Activated T-helper 2 cell treated with anti-CD3 and anti-CD28 coated beads, Interferon-gamma antibody, Interleukin-2, Interleukin-4, amounts not matched to agents 10 μg/mL and 5 μg/mL and 100 μg/mL, durations not matched to agents 14 hours and 24 hours and 36 hours (primary cell): ENCODE measurements at regions of chr12 and their contacts with region 1.

Region 1: DNA sequence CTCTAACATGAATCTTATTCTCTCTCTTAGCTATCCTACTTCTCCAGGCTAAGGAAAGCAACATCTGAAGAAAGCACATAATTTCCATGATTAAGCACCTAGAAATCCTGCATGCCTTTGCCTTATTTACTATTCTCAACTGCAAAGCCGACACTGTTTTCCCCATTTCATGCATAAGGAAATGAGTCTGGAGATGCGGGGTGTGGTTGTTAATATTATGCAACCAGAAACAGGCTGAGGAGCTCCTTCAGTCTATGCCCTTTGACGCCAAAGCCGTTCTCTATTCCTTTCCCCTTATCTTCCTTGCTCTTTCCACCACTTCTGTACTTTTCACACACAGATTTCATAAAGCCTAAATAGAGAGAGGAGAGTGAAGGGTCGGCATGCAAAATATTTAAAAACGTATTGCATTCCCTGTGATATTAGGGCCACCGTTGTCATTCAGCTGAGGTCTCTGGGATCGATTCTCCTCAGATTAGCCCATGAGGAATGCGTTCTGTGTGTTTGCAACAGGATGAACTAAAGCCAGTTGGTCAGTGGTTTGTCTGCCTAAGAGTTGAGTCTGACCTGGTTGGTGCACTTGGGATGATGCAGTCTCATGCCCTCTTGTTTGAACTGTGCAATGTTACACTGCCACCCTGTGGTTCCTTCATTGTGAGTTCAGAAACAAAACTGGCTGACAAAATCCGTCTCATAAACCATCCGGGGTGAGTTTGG is 53.1 kb upstream of the PLEKHG7 start:
- DNase-seq: peak; percentile 21
- H3K4me3 Mint-ChIP-seq: no peak overlapping the region
- H3K27ac Mint-ChIP-seq: no peak overlapping the region
- H3K4me1 Mint-ChIP-seq: peaks cover 2% of the 10 kb centered on the region
- H3K27me3 Mint-ChIP-seq: peaks cover 15% of the 10 kb centered on the region

Region 2: DNA sequence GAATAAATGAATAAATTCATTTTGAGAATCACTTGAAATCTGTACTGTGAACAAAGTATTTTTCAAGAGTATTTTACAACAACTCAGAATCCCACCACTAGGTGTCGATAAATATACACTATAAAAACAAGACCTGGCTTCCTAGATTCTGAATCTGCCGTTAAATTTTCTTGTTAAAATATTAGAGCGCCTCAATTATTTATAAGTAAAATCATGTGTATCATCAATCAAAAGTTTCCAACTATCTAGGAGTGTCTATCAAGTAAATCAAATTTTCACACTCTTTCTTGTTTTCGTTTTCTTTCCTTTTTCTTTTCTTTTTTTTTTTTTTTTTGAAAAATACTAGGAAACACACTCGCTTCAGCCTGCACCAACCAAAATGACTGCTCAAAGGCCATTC is 1287.8 kb before region 1 on chr12:
- intact Hi-C with region 1: loop called (anchors 5 kb)
- DNase-seq: no peak
- H3K4me3 Mint-ChIP-seq: no peak overlapping the region
- H3K27ac Mint-ChIP-seq: no peak overlapping the region
- H3K4me1 Mint-ChIP-seq: no peaks in the 10 kb centered on the region
- H3K27me3 Mint-ChIP-seq: peaks cover 8% of the 10 kb centered on the region

Region 3: DNA sequence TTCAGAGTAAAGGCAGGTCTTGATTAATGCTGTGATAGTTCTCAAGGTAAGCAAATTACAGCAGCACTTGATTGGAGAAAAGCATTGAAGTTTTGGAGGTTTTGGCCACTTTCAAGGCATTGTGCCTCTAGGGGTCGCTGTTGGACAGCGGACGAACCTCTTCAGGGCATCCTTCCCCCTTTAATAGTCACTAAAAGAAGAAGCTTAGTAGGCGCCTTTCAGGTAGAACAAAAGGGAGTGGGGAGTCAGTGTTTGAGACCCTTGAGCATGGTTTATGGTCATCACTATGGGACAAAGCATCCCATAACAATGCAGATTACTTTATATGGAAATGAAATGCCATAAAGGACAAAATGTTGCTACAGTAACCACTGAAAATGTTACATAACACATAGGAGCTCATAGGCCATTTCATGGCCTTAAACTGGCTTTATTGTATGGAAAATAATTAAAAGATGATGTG is 1267.6 kb before region 1 on chr12:
- intact Hi-C with region 1: loop called (anchors 2 kb)
- DNase-seq: peak; percentile 64
- H3K4me3 Mint-ChIP-seq: peak overlapping the region; percentile 78
- H3K27ac Mint-ChIP-seq: no peak overlapping the region
- H3K4me1 Mint-ChIP-seq: peaks cover 3% of the 10 kb centered on the region
- H3K27me3 Mint-ChIP-seq: peaks cover 6% of the 10 kb centered on the region

Region 4: GRCh38 chr12:91577586-91578539 is 1071.8 kb before region 1 on chr12:
- intact Hi-C with region 1: loop called (anchors 10 kb)
- DNase-seq: no peak
- H3K4me3 Mint-ChIP-seq: peak overlapping the region; percentile 38
- H3K27ac Mint-ChIP-seq: no peak overlapping the region
- H3K4me1 Mint-ChIP-seq: peaks cover 9% of the 10 kb centered on the region
- H3K27me3 Mint-ChIP-seq: peaks cover 5% of the 10 kb centered on the region

Region 5: DNA sequence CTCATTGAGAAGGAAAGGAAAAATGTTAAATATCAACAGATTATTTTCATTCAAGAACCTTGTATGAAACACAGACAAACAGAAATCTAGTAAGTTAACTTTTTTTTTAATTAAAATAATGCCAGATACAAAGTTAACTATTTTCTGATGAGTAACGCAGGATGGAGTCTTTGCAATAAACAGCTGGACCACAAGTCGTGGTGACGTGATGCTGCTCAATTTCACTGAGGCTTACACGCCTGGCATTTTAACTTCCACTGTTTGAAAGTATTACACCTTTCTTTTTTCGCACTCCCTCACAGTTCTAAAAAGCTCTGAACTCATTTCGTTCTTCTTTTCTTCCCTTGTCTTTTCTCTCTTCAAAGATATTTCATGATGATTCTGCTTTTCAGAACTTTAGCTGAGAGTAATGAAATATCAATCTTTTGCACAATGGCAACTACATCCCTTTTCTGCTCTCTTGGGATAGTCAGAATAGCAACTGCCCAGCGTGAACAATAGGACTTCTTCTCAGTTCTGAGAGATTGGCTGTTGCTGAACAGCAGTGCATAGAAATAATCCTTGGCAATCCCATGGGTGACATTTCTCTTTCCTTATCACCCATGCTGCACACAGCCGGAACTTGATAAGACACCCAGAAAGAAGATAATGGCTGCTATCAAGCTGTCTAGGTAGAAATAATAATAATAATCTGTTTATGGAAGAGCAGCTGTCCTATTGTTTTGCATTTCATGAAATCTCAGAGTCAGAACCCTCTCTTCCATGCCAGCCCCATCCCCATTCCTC is 664.5 kb before region 1 on chr12:
- intact Hi-C with region 1: loop called (anchors 10 kb)
- DNase-seq: no peak
- H3K4me3 Mint-ChIP-seq: no peak overlapping the region
- H3K27ac Mint-ChIP-seq: no peak overlapping the region
- H3K4me1 Mint-ChIP-seq: peaks cover 16% of the 10 kb centered on the region
- H3K27me3 Mint-ChIP-seq: no peaks in the 10 kb centered on the region

Region 6: GRCh38 chr12:92570056-92570753 is 79.5 kb before region 1 on chr12:
- intact Hi-C with region 1: loop called (anchors 1 kb)
- DNase-seq: no peak
- H3K4me3 Mint-ChIP-seq: no peak overlapping the region
- H3K27ac Mint-ChIP-seq: no peak overlapping the region
- H3K4me1 Mint-ChIP-seq: peaks cover 20% of the 10 kb centered on the region
- H3K27me3 Mint-ChIP-seq: no peaks in the 10 kb centered on the region